Mammary epithelial cell (primary cell): ENCODE measurements at regions of chr14 and their contacts with region 1.

Region 1: DNA sequence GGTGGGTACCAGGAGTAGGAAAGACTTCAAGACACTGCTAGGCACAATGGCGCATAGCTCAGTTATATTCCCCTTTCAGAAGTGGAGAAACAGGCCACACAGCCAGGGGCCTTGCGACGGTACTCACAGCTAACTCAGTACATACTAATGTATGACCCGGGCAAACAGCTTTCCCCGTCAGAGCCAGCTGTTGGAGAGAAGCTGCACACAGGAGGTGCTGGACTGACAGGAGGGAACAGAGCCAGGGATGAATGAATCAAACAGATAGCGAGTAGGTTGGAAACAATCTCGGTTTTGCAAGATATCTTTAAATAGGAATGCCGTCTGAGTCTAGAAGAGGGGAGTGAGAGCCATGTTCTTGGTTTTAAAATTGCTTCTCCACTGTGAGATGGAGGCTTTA is 45.5 kb downstream of the PRIMA1 start:
- DNase-seq: no peak
- H3K4me3 ChIP-seq: no peak overlapping the region
- H3K27ac ChIP-seq: no peak overlapping the region
- H3K4me1 ChIP-seq: no peaks in the 10 kb centered on the region
- H3K27me3 ChIP-seq: no peaks in the 10 kb centered on the region
- CTCF ChIP-seq: no peak

Region 2: GRCh38 chr14:93619176-93619793 is 123.5 kb before region 1 on chr14:
- CTCF ChIA-PET with region 1: no interaction called
- dilution Hi-C with region 1: no loop called
- in situ Hi-C with region 1: no loop called
- intact Hi-C with region 1: no loop called
- DNase-seq: peak; percentile 14
- H3K4me3 ChIP-seq: no peak overlapping the region
- H3K27ac ChIP-seq: no peak overlapping the region
- H3K4me1 ChIP-seq: no peaks in the 10 kb centered on the region
- H3K27me3 ChIP-seq: no peaks in the 10 kb centered on the region
- CTCF ChIP-seq: peak; percentile 58 to 71

Region 3: DNA sequence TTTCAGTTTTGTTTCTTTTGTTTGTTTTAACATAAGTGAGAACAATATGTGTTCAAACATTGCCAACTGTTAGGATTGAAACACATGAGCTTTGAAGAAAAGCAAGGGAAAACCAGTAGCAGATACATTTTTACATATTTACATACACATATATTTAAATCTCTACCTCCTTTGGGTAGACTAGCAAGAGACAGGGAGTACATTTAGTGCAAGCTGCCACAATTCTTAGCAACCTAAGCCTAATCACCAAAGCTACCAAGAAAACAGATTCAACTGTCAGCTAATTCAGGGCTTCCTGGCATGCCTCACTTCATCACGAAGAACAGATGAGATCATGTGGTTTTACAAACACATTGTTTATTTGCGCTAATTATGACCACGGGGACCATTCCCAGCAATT is 97.6 kb before region 1 on chr14:
- CTCF ChIA-PET with region 1: no interaction called
- dilution Hi-C with region 1: no loop called
- in situ Hi-C with region 1: no loop called
- intact Hi-C with region 1: no loop called
- DNase-seq: no peak
- H3K4me3 ChIP-seq: no peak overlapping the region
- H3K27ac ChIP-seq: no peak overlapping the region
- H3K4me1 ChIP-seq: no peaks in the 10 kb centered on the region
- H3K27me3 ChIP-seq: no peaks in the 10 kb centered on the region
- CTCF ChIP-seq: no peak

Region 4: GRCh38 chr14:93778453-93778852 is 35.7 kb after region 1 on chr14:
- CTCF ChIA-PET with region 1: no interaction called
- dilution Hi-C with region 1: no loop called
- in situ Hi-C with region 1: no loop called
- intact Hi-C with region 1: no loop called
- DNase-seq: no peak
- H3K4me3 ChIP-seq: no peak overlapping the region
- H3K27ac ChIP-seq: no peak overlapping the region
- H3K4me1 ChIP-seq: no peaks in the 10 kb centered on the region
- H3K27me3 ChIP-seq: no peaks in the 10 kb centered on the region
- CTCF ChIP-seq: no peak

Region 5: DNA sequence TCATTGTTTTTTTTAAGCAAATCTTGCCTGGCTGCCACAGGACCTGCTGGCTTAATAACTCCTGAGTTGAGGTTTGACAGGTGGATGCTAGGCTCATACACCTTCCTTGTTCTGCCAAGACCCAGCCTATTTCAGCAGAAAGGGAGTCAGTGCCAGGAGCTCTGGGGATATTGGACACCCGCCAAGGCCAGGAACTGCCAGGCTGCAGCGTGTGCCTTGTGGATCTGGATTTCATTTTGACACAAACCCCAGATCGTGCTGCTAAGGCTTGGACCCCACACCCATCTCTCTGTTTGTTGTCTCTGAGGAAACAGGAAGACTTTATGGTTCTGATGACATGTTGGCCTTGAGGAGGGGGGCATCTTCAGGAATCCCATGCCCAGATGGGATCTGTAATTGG is 89.9 kb after region 1 on chr14:
- CTCF ChIA-PET with region 1: no interaction called
- dilution Hi-C with region 1: no loop called
- in situ Hi-C with region 1: no loop called
- intact Hi-C with region 1: no loop called
- DNase-seq: no peak
- H3K4me3 ChIP-seq: no peak overlapping the region
- H3K27ac ChIP-seq: no peak overlapping the region
- H3K4me1 ChIP-seq: no peaks in the 10 kb centered on the region
- H3K27me3 ChIP-seq: no peaks in the 10 kb centered on the region
- CTCF ChIP-seq: no peak

Region 6: GRCh38 chr14:93892923-93893558 is 150.3 kb after region 1 on chr14:
- CTCF ChIA-PET with region 1: no interaction called
- dilution Hi-C with region 1: no loop called
- in situ Hi-C with region 1: no loop called
- intact Hi-C with region 1: loop called (anchors 5 kb)
- DNase-seq: peak; percentile 41
- H3K4me3 ChIP-seq: no peak overlapping the region
- H3K27ac ChIP-seq: no peak overlapping the region
- H3K4me1 ChIP-seq: no peaks in the 10 kb centered on the region
- H3K27me3 ChIP-seq: no peaks in the 10 kb centered on the region
- CTCF ChIP-seq: peak; percentile 98 to 99